ENCODE measurements at regions of chr6 and their contacts with region 1.

Region 1: DNA sequence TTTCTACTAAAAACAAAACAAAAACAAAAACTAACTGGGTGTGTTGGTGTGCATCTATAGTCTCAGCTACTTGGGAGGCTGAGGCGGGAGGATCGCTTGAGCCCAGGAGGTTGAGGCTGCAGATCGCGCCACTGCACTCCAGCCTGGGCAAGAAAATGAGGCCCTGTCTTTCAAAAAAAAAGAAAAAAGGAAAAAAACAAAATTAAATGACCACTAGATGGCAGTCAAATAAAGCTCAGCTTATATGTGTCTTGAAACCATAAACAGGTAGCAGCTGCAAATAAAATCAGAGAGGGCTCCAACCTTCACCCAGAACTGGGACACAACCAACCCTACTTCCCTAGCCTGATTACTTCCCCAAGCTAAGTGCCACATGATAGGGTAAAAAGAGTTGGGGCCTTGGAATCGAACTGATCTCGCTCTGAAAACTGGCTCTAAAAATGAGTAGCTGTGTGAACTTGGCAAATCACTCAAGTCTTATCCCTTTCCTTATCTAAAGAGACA is 67.1 kb upstream of the ADGRF4 start:
- DNase-seq: no peak
- ATAC-seq: no peak
- H3K4me3 Mint-ChIP-seq: no peak overlapping the region
- H3K27ac Mint-ChIP-seq: no peak overlapping the region
- H3K4me1 Mint-ChIP-seq: peaks cover 2% of the 10 kb centered on the region
- H3K27me3 Mint-ChIP-seq: no peaks in the 10 kb centered on the region
- CTCF ChIP-seq: no peak

Region 2: DNA sequence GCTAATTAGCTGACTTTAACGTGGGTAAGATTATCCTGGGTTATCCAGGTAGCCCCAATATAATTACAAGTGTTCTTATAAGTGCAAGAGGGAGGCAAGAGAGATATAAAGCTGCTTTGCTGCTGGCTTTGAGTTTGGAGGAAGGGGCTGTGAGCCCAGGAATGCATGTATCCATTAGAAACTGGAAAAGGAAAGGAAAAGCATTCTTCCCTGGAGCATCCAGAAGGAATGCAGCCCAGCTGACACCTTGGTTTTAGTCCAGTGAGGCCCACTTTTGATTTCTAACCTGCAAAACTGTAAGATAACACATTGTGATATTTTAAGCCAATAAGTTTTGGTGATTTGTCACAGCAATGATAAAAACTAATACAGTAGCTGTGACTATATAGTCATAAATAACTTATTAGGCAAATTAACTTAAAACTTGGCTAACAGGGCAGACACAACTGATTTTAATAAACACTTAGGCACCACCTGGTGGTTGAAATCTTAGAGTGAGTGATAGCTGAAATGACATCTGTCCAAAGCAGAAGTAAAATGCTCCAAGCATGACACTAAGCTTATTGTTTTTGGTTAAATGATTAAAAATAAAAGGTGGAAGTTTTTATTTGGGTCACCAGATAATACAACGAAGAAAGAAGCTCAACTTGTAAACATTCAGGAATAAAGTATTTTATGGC is 102.7 kb after region 1 on chr6:
- CTCF ChIA-PET with region 1: interaction called, 20 read pairs
- POLR2A ChIA-PET with region 1: no interaction called
- intact Hi-C with region 1: loop called (anchors 1 kb)
- DNase-seq: no peak
- ATAC-seq: no peak
- H3K4me3 Mint-ChIP-seq: no peak overlapping the region
- H3K27ac Mint-ChIP-seq: no peak overlapping the region
- H3K4me1 Mint-ChIP-seq: no peaks in the 10 kb centered on the region
- H3K27me3 Mint-ChIP-seq: peaks cover 2% of the 10 kb centered on the region
- CTCF ChIP-seq: no peak

Region 3: DNA sequence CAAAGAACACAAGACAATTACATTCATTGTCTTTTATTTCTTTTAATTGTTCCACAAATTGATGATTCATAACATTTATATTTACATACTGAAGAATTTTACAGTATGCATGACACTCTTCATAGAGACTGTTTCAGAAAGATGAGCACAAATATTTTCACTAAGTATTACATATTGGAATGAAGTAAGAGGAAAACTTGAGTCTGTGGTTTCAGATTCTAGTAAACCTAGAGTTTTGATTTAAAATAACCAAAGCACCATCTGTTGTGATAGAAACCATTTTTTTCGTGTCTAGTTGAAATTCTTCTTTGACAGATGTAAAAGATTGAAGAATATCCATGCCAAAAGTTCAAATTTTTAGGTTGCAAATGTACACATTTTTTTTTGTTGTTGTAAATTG is 118.4 kb after region 1 on chr6:
- CTCF ChIA-PET with region 1: no interaction called
- POLR2A ChIA-PET with region 1: no interaction called
- intact Hi-C with region 1: no loop called
- DNase-seq: no peak
- ATAC-seq: no peak
- H3K4me3 Mint-ChIP-seq: no peak overlapping the region
- H3K27ac Mint-ChIP-seq: no peak overlapping the region
- H3K4me1 Mint-ChIP-seq: no peaks in the 10 kb centered on the region
- H3K27me3 Mint-ChIP-seq: peaks cover 7% of the 10 kb centered on the region
- CTCF ChIP-seq: no peak

Region 4: DNA sequence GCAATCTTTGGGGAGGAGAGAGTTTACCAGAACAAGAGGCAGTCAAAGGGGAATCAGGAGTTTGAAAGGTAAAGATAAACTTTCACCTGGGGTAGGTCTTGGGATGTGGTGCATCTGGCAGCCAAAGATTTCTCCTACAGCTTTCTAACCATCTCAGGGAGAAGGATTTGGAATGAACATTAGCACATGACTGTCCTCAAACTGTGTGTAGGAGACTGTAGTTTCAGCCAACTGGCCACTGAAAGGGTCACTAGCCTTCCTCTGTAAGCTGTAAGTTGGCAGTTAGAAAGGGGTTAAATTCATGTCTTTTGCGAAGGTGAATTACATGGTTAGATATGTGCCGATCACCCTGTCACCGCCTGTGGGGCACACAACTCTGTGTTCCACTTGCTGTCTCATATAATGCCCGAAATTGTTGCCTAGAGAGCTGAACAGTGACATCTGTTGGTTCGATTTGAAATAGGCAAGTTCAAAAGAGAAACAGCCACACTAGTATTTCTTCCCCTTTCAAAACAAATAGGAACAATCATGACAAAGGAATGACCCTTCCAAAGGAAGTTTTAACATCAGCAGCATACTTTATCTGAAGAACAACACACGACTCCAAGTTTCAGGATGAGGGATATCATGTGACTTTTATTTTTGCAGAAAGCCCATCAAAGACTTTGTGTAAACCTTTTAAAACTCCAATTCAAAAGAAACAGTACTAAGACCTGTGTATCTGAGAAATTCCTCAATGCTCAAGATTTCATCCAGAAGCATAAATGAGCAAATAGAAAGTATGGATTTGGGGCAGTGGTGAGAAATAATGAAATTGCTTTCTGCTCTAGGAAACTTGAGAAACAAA is 149.4 kb after region 1 on chr6:
- CTCF ChIA-PET with region 1: interaction called, 19 read pairs
- POLR2A ChIA-PET with region 1: no interaction called
- intact Hi-C with region 1: loop called (anchors 1 kb)
- DNase-seq: no peak
- ATAC-seq: peak; percentile 69
- H3K4me3 Mint-ChIP-seq: no peak overlapping the region
- H3K27ac Mint-ChIP-seq: no peak overlapping the region
- H3K4me1 Mint-ChIP-seq: peaks cover 5% of the 10 kb centered on the region
- H3K27me3 Mint-ChIP-seq: peaks cover 13% of the 10 kb centered on the region
- CTCF ChIP-seq: no peak

Region 5: GRCh38 chr6:48080227-48081009 is 449.1 kb after region 1 on chr6:
- CTCF ChIA-PET with region 1: no interaction called
- POLR2A ChIA-PET with region 1: no interaction called
- intact Hi-C with region 1: no loop called
- DNase-seq: no peak
- ATAC-seq: no peak
- H3K4me3 Mint-ChIP-seq: no peak overlapping the region
- H3K27ac Mint-ChIP-seq: no peak overlapping the region
- H3K4me1 Mint-ChIP-seq: no peaks in the 10 kb centered on the region
- H3K27me3 Mint-ChIP-seq: no peaks in the 10 kb centered on the region
- CTCF ChIP-seq: no peak

Region 6: GRCh38 chr6:49409951-49410542 is 1778.7 kb after region 1 on chr6:
- CTCF ChIA-PET with region 1: interaction called, 9 read pairs
- POLR2A ChIA-PET with region 1: no interaction called
- intact Hi-C with region 1: loop called (anchors 1 kb)
- DNase-seq: peak; percentile 19
- ATAC-seq: peak; percentile 54
- H3K4me3 Mint-ChIP-seq: no peak overlapping the region
- H3K27ac Mint-ChIP-seq: no peak overlapping the region
- H3K4me1 Mint-ChIP-seq: no peaks in the 10 kb centered on the region
- H3K27me3 Mint-ChIP-seq: peaks cover 6% of the 10 kb centered on the region
- CTCF ChIP-seq: peak; percentile 72